T-cell (primary cell): ENCODE measurements at regions of chr2 and their contacts with region 1.

Region 1: GRCh38 chr2:175330194-175330593 is 148.7 kb upstream of the ATP5MC3 start:
- DNase-seq: no peak
- ATAC-seq: no peak
- H3K4me3 ChIP-seq: no peak overlapping the region
- H3K4me3 Mint-ChIP-seq: no peak overlapping the region
- H3K27ac ChIP-seq: no peak overlapping the region
- H3K27ac Mint-ChIP-seq: no peak overlapping the region
- H3K4me1 ChIP-seq: no peaks in the 10 kb centered on the region
- H3K4me1 Mint-ChIP-seq: no peaks in the 10 kb centered on the region
- H3K27me3 ChIP-seq: peaks cover 0 to 3% of the 10 kb centered on the region in 2 experiments
- H3K27me3 Mint-ChIP-seq: no peaks in the 10 kb centered on the region

Region 2: GRCh38 chr2:175030380-175031271 is 299.6 kb before region 1 on chr2:
- CTCF ChIA-PET with region 1: no interaction called
- POLR2A ChIA-PET with region 1: no interaction called
- DNase-seq: peak in 1 of 35 experiments; percentile 9
- ATAC-seq: no peak
- H3K4me3 ChIP-seq: no peak overlapping the region
- H3K4me3 Mint-ChIP-seq: no peak overlapping the region
- H3K27ac ChIP-seq: no peak overlapping the region
- H3K27ac Mint-ChIP-seq: no peak overlapping the region
- H3K4me1 ChIP-seq: no peaks in the 10 kb centered on the region
- H3K4me1 Mint-ChIP-seq: peaks cover 0 to 2% (median 1%) of the 10 kb centered on the region in 3 donors
- H3K27me3 ChIP-seq: no peaks in the 10 kb centered on the region
- H3K27me3 Mint-ChIP-seq: no peaks in the 10 kb centered on the region

Region 3: GRCh38 chr2:175318542-175318941 is 11.7 kb before region 1 on chr2:
- CTCF ChIA-PET with region 1: interaction called in 1 of 2 experiments, 3 read pairs
- POLR2A ChIA-PET with region 1: interaction called, 8 to 10 read pairs
- DNase-seq: no peak
- ATAC-seq: no peak
- H3K4me3 ChIP-seq: no peak overlapping the region
- H3K4me3 Mint-ChIP-seq: no peak overlapping the region
- H3K27ac ChIP-seq: no peak overlapping the region
- H3K27ac Mint-ChIP-seq: no peak overlapping the region
- H3K4me1 ChIP-seq: no peaks in the 10 kb centered on the region
- H3K4me1 Mint-ChIP-seq: no peaks in the 10 kb centered on the region
- H3K27me3 ChIP-seq: no peaks in the 10 kb centered on the region
- H3K27me3 Mint-ChIP-seq: peaks cover 11 to 13% of the 10 kb centered on the region in 2 donors

Region 4: DNA sequence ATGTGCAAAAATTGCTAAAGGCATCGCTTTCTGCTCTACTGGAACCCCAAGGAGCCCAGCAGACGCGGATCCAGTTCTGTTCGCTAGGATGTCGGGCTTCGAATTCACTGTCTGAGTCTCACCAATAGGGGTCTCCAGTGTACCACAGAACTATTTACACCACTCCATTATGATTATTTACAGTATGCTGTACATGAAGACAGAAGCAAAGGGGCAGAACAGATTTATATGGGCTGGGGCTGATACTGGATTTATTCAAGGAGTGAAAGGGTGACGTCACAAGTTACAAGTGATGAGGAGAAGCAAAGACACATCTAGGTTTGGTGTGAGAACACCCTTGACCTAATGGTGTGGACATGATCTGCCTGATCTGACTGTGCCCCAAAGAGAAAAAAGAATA is 36.6 kb after region 1 on chr2:
- CTCF ChIA-PET with region 1: no interaction called
- POLR2A ChIA-PET with region 1: no interaction called
- DNase-seq: peak in 4 of 35 experiments; percentile 1 to 39 (median 6)
- ATAC-seq: no peak
- H3K4me3 ChIP-seq: no peak overlapping the region
- H3K4me3 Mint-ChIP-seq: no peak overlapping the region
- H3K27ac ChIP-seq: no peak overlapping the region
- H3K27ac Mint-ChIP-seq: no peak overlapping the region
- H3K4me1 ChIP-seq: no peaks in the 10 kb centered on the region
- H3K4me1 Mint-ChIP-seq: no peaks in the 10 kb centered on the region
- H3K27me3 ChIP-seq: peaks cover 0 to 10% of the 10 kb centered on the region in 2 experiments
- H3K27me3 Mint-ChIP-seq: peaks cover 15 to 25% of the 10 kb centered on the region in 2 donors

Region 5: DNA sequence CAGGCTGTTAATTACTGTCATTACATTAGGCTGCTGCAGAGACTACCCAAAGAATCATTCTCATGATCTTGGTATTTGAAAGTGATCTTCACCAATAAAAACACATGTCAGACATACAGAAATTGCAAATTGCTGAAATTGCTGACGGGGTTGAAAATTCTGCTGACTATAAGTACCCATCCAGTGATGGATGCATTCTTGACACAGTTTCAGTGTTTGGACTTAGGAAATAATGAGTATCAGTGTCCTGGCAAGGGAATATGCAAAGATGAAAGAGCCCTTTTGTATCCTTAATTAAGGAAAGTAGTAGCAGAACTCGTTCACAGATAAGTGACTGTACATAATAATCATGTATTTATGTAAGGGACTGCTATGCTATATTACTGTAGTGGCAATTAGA is 72.4 kb after region 1 on chr2:
- CTCF ChIA-PET with region 1: no interaction called
- POLR2A ChIA-PET with region 1: no interaction called
- DNase-seq: no peak
- ATAC-seq: no peak
- H3K4me3 ChIP-seq: no peak overlapping the region
- H3K4me3 Mint-ChIP-seq: no peak overlapping the region
- H3K27ac ChIP-seq: no peak overlapping the region
- H3K27ac Mint-ChIP-seq: no peak overlapping the region
- H3K4me1 ChIP-seq: no peaks in the 10 kb centered on the region
- H3K4me1 Mint-ChIP-seq: no peaks in the 10 kb centered on the region
- H3K27me3 ChIP-seq: peaks cover 0 to 3% of the 10 kb centered on the region in 2 experiments
- H3K27me3 Mint-ChIP-seq: peaks cover 16 to 29% of the 10 kb centered on the region in 2 donors

Region 6: DNA sequence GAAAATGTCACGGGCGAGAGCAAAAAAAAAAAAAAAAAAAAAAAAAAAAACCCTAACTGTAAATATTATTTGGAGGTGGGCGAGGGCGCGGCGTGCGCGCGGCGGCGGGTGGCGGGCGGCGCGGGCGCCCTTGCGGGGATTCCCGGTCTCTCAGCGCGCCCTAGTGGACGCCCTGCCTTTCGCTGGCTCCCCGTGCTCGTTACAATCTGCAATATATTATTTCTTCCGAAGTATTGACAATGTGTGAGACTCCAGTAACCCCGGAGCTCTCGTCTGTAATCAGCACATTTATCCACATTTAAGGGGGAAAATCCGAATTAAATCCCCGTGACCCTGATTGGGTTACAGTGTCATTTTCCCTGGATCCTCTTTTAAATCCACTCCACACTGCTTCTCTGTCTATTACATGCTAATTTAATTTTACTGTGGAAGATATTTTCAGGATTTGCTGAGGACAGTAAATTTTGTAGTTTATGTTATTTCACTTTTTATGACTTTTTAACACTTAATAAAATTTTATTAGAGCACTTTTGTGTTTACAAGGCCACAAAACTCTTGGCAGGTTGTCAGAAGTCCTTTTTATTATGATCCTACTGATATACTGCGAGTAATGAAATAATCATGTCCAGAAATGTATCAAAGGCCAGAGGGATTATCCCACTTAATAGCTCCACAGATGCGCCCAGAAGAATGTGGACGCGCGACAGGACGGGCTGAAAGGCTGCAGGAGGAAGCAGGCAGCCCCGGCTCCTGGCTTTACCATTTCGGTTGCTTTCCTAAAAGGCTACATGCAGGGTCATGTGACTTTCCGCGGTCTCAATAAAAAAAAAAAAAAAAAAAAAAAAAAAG is 1308.2 kb after region 1 on chr2:
- CTCF ChIA-PET with region 1: no interaction called
- POLR2A ChIA-PET with region 1: no interaction called
- DNase-seq: peak in 33 of 35 experiments; percentile 12 to 70 (median 45)
- ATAC-seq: peak; percentile 75 to 90 (median 79)
- H3K4me3 ChIP-seq: peak overlapping the region; percentile 42 to 67
- H3K4me3 Mint-ChIP-seq: peak overlapping the region; percentile 53 to 63 (median 57)
- H3K27ac ChIP-seq: no peak overlapping the region
- H3K27ac Mint-ChIP-seq: no peak overlapping the region
- H3K4me1 ChIP-seq: peaks cover 0 to 9% of the 10 kb centered on the region in 2 experiments
- H3K4me1 Mint-ChIP-seq: peaks cover 0 to 9% (median 9%) of the 10 kb centered on the region in 3 donors
- H3K27me3 ChIP-seq: peaks cover 22 to 37% of the 10 kb centered on the region in 2 experiments
- H3K27me3 Mint-ChIP-seq: peaks cover 56 to 68% of the 10 kb centered on the region in 2 donors